Heart right ventricle (tissue), 16 donors: ENCODE measurements at regions of chr7 and their contacts with region 1.

Region 1: GRCh38 chr7:128890306-128891109 is 20.0 kb downstream of the KCP start:
- DNase-seq: no peak
- ATAC-seq: peak in 2 of 8 donors; percentile 31 to 38
- H3K4me3 ChIP-seq: peak overlapping the region in 7 of 10 donors; percentile 5 to 39 (median 22)
- H3K27ac ChIP-seq: no peak overlapping the region
- H3K4me1 ChIP-seq: peaks cover 0 to 5% (median 0%) of the 10 kb centered on the region in 9 donors
- H3K27me3 ChIP-seq: peaks cover 11 to 40% (median 13%) of the 10 kb centered on the region in 7 donors
- CTCF ChIP-seq: no peak

Region 2: DNA sequence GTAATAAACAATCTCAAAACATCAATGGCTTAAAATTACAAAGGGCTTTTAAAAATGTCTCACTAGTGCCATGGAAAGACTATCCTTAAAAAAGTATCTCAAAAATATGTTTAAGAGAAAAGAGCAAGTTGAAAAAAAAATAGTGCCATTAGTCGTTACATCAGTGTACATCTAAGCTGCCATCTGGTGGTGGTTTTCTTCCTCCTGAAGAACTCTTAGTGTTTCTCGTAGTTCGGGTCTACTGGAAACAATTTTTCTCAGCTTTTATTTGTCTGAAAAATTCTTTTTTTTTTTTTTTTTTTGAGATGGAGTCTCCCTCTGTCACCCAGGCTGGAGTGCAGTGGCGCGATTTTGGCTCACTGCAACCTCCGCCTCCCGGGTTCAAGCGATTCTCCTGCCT is 224.3 kb before region 1 on chr7:
- intact Hi-C with region 1: loop called in 2 of 10 experiments (anchors 10 kb)
- DNase-seq: no peak
- ATAC-seq: no peak
- H3K4me3 ChIP-seq: no peak overlapping the region
- H3K27ac ChIP-seq: no peak overlapping the region
- H3K4me1 ChIP-seq: no peaks in the 10 kb centered on the region
- H3K27me3 ChIP-seq: no peaks in the 10 kb centered on the region
- CTCF ChIP-seq: peak in 2 of 9 donors; percentile 26

Region 3: GRCh38 chr7:128923411-128923800 is 32.9 kb after region 1 on chr7:
- intact Hi-C with region 1: no loop called
- DNase-seq: no peak
- ATAC-seq: no peak
- H3K4me3 ChIP-seq: no peak overlapping the region
- H3K27ac ChIP-seq: no peak overlapping the region
- H3K4me1 ChIP-seq: peaks cover 0 to 4% (median 0%) of the 10 kb centered on the region in 9 donors
- H3K27me3 ChIP-seq: peaks cover 0 to 60% (median 35%) of the 10 kb centered on the region in 7 donors
- CTCF ChIP-seq: no peak

Region 4: GRCh38 chr7:129122751-129123509 is 232.4 kb after region 1 on chr7:
- intact Hi-C with region 1: no loop called
- DNase-seq: no peak
- ATAC-seq: peak in 1 of 8 donors; percentile 29
- H3K4me3 ChIP-seq: no peak overlapping the region
- H3K27ac ChIP-seq: peak overlapping the region in 1 of 10 donors; percentile 57
- H3K4me1 ChIP-seq: peaks cover 0 to 20% (median 0%) of the 10 kb centered on the region in 9 donors
- H3K27me3 ChIP-seq: peaks cover 0 to 34% (median 6%) of the 10 kb centered on the region in 7 donors
- CTCF ChIP-seq: no peak